ENCODE measurements at regions of chr11 and their contacts with region 1.

Region 1: GRCh38 chr11:77400773-77401449 is 73.0 kb downstream of the PAK1 start:
- DNase-seq: peak in 1 of 2 donors; percentile 67
- ATAC-seq: peak; percentile 95 to 97 (median 96)
- H3K4me3 ChIP-seq: peak overlapping the region; percentile 24
- H3K27ac ChIP-seq: peak overlapping the region; percentile 76
- H3K4me1 ChIP-seq: peaks cover 64% of the 10 kb centered on the region
- H3K27me3 ChIP-seq: no peaks in the 10 kb centered on the region
- CTCF ChIP-seq: peak; percentile 30

Region 2: DNA sequence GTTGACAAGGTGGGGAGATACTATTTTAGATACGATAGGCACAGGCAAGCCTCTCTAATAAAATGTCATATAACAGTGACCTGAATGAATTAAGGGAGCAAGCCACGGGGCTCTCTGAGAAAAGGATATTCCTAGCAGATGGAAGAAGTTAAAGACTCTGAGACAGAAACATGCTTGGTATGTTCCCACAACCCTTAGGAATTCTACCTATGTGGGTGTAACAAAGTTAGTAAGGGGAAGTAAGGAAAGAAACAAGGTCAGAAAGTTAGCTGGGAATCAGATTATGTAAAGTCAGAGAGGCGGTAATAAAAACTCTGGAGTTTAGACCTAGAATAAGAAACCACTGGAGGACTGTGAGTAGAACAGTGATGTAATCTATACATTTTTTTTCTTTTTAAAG is 39.7 kb before region 1 on chr11:
- intact Hi-C with region 1: loop called in 1 of 2 experiments (anchors 5 kb)
- DNase-seq: no peak
- ATAC-seq: no peak
- H3K4me3 ChIP-seq: no peak overlapping the region
- H3K27ac ChIP-seq: no peak overlapping the region
- H3K4me1 ChIP-seq: no peaks in the 10 kb centered on the region
- H3K27me3 ChIP-seq: no peaks in the 10 kb centered on the region
- CTCF ChIP-seq: no peak

Region 3: DNA sequence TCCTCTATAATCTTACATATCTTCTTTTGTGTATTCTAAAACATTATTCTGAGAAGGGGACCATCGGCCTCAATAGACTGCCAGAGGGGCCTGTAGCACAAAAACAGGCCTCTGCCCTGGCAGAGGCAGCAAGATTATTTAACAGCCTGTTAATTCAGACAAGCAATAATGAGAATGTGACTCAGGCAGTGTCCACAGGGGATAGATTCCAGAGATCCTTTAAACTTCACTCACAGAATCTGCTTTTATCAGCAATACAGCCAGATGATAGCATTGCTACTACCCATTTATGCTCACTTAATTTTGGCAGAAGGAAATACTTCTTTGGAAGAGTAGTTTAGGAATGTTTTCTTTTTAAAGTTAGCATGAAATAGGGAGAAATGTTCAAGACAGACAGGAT is 464.9 kb after region 1 on chr11:
- intact Hi-C with region 1: no loop called
- DNase-seq: no peak
- ATAC-seq: no peak
- H3K4me3 ChIP-seq: no peak overlapping the region
- H3K27ac ChIP-seq: no peak overlapping the region
- H3K4me1 ChIP-seq: peaks cover 8% of the 10 kb centered on the region
- H3K27me3 ChIP-seq: no peaks in the 10 kb centered on the region
- CTCF ChIP-seq: no peak

Measured in psoas muscle (tissue), 8 donors.